ENCODE measurements at regions of chr10 and their contacts with region 1.

Region 1: GRCh38 chr10:116925056-116925455 is 75.8 kb downstream of the ENO4 start:
- DNase-seq: no peak

Region 2: DNA sequence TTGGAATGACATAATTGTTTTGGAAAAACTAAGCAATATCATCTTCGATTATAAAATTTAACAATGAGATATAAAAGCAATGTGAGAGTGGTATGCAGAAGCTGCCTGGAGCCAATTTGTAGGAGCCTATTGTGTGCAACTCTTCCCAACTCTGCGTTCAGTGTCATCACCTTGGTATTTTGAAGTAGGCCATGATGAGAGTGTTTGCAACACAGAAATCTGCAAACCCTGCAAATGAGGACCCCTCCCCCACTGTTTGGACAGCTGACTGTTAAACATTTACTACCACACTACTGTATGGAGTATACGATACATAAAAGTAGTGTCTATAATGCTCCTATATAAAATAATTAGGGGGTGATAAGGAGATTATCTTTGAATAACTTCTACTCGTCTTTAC is 1300.6 kb before region 1 on chr10:
- intact Hi-C with region 1: no loop called
- DNase-seq: no peak

Region 3: GRCh38 chr10:118163217-118163616 is 1238.2 kb after region 1 on chr10:
- intact Hi-C with region 1: no loop called
- DNase-seq: no peak

Region 4: GRCh38 chr10:118557946-118558345 is 1632.9 kb after region 1 on chr10:
- intact Hi-C with region 1: loop called in 1 of 2 experiments (anchors 10 kb)
- DNase-seq: no peak